CD8-positive, alpha-beta T cell (primary cell): ENCODE measurements at regions of chr3 and their contacts with region 1.

Region 1: DNA sequence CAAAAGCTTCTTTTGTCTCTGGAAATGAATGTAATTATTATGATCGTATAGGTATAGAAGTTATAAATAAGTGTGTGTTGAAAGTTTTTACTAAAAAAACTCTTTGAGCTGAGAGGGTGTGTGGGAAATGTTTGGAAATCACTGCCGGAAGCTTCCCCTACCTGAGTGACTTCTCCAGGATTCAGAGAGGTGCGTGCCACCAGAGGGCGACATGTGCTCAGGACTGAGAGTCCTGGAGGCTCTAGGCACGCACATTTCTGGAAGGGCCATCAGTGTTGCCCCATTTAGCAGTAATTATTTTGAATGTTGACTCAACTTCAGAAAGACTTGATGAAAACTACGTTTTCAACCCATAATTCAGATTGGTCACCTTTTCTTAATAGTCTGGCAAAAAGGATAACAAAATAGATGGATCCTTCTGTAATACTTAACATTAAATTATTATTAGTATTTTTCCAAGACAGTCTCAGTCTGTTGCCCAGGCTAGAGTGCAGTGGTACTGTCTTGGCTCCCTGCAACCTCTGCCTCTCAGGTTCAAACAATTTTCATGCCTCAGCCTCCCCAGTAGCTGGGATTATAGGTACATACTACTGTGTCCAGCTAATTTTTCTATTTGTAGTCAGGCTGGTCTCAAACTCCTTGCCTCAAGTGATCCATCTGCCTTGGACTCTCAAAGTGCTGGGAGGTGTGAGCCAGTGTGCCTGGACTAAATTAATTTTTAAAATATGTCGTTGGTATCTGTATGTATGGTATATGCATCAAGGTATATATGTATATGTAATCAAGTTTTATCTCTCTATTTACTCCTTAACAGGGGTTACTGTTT is 34.5 kb downstream of the GPR171 start:
- DNase-seq: peak; percentile 54 to 89 (median 82)
- ATAC-seq: peak; percentile 76
- H3K4me3 ChIP-seq: no peak overlapping the region
- H3K4me3 Mint-ChIP-seq: no peak overlapping the region
- H3K27ac ChIP-seq: no peak overlapping the region
- H3K27ac Mint-ChIP-seq: no peak overlapping the region
- H3K4me1 ChIP-seq: peaks cover 38% of the 10 kb centered on the region
- H3K4me1 Mint-ChIP-seq: peaks cover 34% of the 10 kb centered on the region
- H3K27me3 ChIP-seq: no peaks in the 10 kb centered on the region
- H3K27me3 Mint-ChIP-seq: no peaks in the 10 kb centered on the region
- CTCF ChIP-seq: peak; percentile 97

Region 2: GRCh38 chr3:151192545-151192944 is 24.1 kb after region 1 on chr3:
- CTCF ChIA-PET with region 1: interaction called, 21 read pairs
- POLR2A ChIA-PET with region 1: interaction called, 3 read pairs
- intact Hi-C with region 1: no loop called
- DNase-seq: no peak
- ATAC-seq: no peak
- H3K4me3 ChIP-seq: no peak overlapping the region
- H3K4me3 Mint-ChIP-seq: no peak overlapping the region
- H3K27ac ChIP-seq: no peak overlapping the region
- H3K27ac Mint-ChIP-seq: no peak overlapping the region
- H3K4me1 ChIP-seq: no peaks in the 10 kb centered on the region
- H3K4me1 Mint-ChIP-seq: peaks cover 23% of the 10 kb centered on the region
- H3K27me3 ChIP-seq: no peaks in the 10 kb centered on the region
- H3K27me3 Mint-ChIP-seq: no peaks in the 10 kb centered on the region
- CTCF ChIP-seq: no peak

Region 3: DNA sequence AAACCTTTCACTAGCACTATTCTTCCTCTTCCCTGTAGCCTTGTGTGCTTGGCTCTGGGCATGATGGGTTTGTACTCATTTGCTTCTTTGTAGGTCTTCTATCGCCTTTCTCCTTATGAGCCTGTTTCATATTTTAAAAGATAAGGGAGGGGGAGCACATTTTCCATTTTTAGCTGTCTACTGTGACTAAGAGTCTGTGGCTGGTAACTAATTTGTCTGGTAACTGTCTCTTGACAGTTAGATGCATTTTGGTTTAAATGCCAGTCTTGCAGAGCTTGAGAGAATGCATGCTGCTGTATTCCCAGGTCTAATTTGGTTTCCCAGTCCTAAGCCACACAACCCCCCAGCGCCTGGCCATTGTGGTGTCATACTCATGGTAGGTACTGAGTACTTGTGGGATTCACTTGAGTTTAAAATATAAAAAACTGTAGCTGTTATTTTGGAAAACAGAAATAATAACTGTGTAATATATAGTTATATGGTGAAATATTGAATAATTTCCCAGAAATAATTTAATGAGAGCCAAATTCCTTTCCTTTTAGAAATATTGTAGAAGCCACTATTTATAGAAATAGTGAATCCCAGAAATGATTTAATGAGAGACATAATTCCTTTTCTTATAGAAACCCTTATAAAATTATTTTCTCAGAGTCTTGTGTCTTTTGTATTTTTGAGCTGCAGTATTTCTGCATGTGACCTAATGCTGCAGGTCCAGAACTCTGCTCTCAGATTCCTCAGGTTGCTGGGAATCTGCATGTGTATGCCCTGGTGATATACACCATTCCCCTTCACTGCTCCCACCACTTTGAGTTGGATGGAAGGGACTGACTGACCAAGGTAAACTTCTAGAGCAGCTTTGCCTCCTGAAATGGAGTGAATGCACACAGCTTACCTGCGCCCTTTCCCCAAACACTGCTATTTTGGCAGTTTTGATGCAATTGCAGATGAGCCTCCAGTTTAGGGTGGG is 48.4 kb after region 1 on chr3:
- CTCF ChIA-PET with region 1: interaction called, 81 read pairs
- POLR2A ChIA-PET with region 1: no interaction called
- intact Hi-C with region 1: loop called in 1 of 2 experiments (anchors 5 kb)
- DNase-seq: no peak
- ATAC-seq: no peak
- H3K4me3 ChIP-seq: no peak overlapping the region
- H3K4me3 Mint-ChIP-seq: no peak overlapping the region
- H3K27ac ChIP-seq: no peak overlapping the region
- H3K27ac Mint-ChIP-seq: no peak overlapping the region
- H3K4me1 ChIP-seq: no peaks in the 10 kb centered on the region
- H3K4me1 Mint-ChIP-seq: no peaks in the 10 kb centered on the region
- H3K27me3 ChIP-seq: no peaks in the 10 kb centered on the region
- H3K27me3 Mint-ChIP-seq: no peaks in the 10 kb centered on the region
- CTCF ChIP-seq: no peak

Region 4: GRCh38 chr3:151276687-151277042 is 108.2 kb after region 1 on chr3:
- CTCF ChIA-PET with region 1: interaction called, 333 read pairs
- POLR2A ChIA-PET with region 1: interaction called, 3 read pairs
- intact Hi-C with region 1: loop called in 1 of 2 experiments (anchors 1 kb)
- DNase-seq: peak in 6 of 9 experiments; percentile 14 to 74 (median 52)
- ATAC-seq: peak; percentile 88
- H3K4me3 ChIP-seq: no peak overlapping the region
- H3K4me3 Mint-ChIP-seq: peak overlapping the region; percentile 62
- H3K27ac ChIP-seq: peak overlapping the region in 1 of 2 experiments; percentile 37
- H3K27ac Mint-ChIP-seq: peak overlapping the region; percentile 97
- H3K4me1 ChIP-seq: peaks cover 30% of the 10 kb centered on the region
- H3K4me1 Mint-ChIP-seq: peaks cover 48% of the 10 kb centered on the region
- H3K27me3 ChIP-seq: no peaks in the 10 kb centered on the region
- H3K27me3 Mint-ChIP-seq: no peaks in the 10 kb centered on the region
- CTCF ChIP-seq: no peak

Region 5: DNA sequence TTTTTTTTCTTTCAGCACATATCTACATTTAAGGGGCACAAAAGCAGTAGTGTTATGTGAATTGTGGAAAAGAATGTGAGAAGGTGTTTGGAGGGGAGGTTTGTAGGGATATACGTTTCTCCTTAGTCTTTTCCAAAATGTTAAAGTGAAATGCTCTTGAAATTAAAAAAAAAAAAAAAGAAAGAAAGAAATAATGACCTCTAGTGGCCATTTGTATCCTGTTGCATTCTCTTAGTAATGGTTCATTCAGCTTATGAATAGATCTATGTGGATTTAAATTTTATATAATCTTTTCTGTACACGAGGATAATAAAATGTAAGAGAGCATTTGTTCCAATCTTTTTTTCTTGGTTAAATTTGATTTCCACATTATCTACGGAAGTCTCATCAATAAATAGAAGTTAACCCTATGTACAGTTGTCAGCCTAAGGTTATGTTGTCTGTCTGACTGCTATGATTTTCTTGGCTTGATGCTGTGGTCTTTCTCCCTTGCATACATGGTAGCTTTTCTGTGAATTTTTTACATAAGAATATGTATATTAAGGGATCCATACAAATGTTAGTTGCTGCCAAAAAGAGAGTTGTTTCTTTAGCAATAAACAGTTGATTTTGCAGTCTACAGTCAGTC is 159.2 kb after region 1 on chr3:
- CTCF ChIA-PET with region 1: interaction called, 21 read pairs
- POLR2A ChIA-PET with region 1: no interaction called
- intact Hi-C with region 1: loop called in 1 of 2 experiments (anchors 5 kb)
- DNase-seq: peak in 2 of 9 experiments; percentile 12 to 32
- ATAC-seq: no peak
- H3K4me3 ChIP-seq: no peak overlapping the region
- H3K4me3 Mint-ChIP-seq: no peak overlapping the region
- H3K27ac ChIP-seq: no peak overlapping the region
- H3K27ac Mint-ChIP-seq: no peak overlapping the region
- H3K4me1 ChIP-seq: no peaks in the 10 kb centered on the region
- H3K4me1 Mint-ChIP-seq: peaks cover 6% of the 10 kb centered on the region
- H3K27me3 ChIP-seq: no peaks in the 10 kb centered on the region
- H3K27me3 Mint-ChIP-seq: peaks cover 2% of the 10 kb centered on the region
- CTCF ChIP-seq: peak; percentile 72